Mammary epithelial cell (primary cell): ENCODE measurements at regions of chr1 and their contacts with region 1.

Region 1: DNA sequence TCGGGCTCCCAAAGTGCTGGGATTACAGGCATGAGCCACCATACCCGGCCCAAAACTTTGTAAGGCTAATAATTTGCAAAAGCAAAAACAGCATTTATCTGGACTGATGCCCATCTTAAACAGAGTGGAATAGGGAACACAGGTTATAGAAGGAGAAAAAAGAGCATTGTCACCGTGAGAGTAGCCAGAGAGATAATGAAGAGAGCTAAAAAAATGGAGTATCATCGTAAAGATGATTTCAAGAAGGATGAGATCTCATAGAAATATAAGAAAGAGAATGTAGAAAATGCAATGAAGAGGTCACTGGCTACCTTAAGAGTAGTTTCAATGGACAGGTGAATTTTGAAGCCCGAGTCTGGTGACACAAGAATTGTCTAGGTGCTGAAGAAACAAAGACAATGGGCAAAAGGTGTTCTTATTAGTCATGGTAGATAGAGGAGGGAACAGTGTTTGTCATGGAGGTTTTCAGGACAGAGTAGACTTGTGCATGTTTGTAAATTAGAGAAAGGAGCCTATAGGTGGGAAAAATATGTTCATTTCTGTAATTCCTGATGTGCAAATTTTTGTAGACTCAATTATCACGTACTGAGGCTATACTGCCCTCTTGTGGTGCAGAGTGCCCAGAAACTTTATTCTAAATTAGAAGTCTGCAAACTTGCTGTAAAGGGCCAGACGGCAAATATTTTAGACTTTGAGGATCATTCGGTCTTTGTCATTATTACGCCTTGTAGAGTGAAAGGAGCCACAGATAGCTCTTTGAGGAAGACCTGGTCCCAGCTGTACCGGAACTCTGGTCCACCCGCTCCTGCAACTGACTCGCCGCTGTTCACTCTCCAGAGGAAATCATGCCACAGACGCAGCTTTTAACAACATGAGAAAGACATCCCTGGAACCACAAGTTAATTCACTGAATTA is 8.1 kb upstream of the TMEM183A start:
- DNase-seq: peak; percentile 28
- H3K4me3 ChIP-seq: no peak overlapping the region
- H3K27ac ChIP-seq: no peak overlapping the region
- H3K4me1 ChIP-seq: no peaks in the 10 kb centered on the region
- H3K27me3 ChIP-seq: no peaks in the 10 kb centered on the region
- CTCF ChIP-seq: peak; percentile 80 to 86

Region 2: GRCh38 chr1:202750758-202751157 is 248.3 kb before region 1 on chr1:
- CTCF ChIA-PET with region 1: no interaction called
- dilution Hi-C with region 1: no loop called
- in situ Hi-C with region 1: no loop called
- intact Hi-C with region 1: loop called (anchors 5 kb)
- DNase-seq: no peak
- H3K4me3 ChIP-seq: no peak overlapping the region
- H3K27ac ChIP-seq: no peak overlapping the region
- H3K4me1 ChIP-seq: no peaks in the 10 kb centered on the region
- H3K27me3 ChIP-seq: no peaks in the 10 kb centered on the region
- CTCF ChIP-seq: peak in 1 of 2 donors; percentile 10

Region 3: DNA sequence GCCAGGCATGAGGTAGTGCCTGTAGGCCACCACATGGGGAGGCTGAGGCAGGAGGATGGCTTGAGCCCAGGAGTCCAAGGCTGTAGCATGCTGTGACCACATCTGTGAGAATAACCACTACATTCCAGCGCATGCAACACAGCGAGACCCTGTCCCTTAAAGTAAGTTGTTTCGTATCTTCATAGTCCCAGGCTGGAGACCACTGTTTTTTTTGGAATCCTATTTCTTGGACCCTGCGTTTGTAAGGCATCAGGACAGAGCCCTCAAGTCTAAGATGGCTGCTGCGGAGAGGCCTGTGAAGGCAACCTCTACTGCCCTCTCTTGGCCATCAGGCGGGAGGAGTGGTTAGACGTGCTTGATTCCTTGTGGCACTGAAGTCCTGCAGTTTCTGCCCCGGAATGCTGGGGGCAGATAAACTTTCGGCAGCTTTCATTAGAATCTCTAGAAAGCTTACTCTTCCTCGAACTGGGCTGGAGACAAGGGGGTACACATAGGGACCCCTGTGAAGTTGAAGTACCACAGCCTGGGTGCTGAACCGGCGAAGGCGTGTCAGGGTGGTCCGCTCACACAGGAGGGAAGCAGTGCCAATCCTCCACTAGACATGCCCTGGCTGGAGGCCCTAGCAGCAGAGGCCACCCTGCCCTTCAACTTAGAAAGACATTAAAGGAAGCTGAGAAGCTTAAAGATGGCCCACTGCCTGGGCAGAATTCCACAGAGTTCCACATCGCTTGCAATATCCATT is 146.8 kb before region 1 on chr1:
- CTCF ChIA-PET with region 1: no interaction called
- dilution Hi-C with region 1: no loop called
- in situ Hi-C with region 1: no loop called
- intact Hi-C with region 1: loop called (anchors 2 kb)
- DNase-seq: peak; percentile 36
- H3K4me3 ChIP-seq: no peak overlapping the region
- H3K27ac ChIP-seq: no peak overlapping the region
- H3K4me1 ChIP-seq: no peaks in the 10 kb centered on the region
- H3K27me3 ChIP-seq: no peaks in the 10 kb centered on the region
- CTCF ChIP-seq: peak; percentile 59 to 77

Region 4: DNA sequence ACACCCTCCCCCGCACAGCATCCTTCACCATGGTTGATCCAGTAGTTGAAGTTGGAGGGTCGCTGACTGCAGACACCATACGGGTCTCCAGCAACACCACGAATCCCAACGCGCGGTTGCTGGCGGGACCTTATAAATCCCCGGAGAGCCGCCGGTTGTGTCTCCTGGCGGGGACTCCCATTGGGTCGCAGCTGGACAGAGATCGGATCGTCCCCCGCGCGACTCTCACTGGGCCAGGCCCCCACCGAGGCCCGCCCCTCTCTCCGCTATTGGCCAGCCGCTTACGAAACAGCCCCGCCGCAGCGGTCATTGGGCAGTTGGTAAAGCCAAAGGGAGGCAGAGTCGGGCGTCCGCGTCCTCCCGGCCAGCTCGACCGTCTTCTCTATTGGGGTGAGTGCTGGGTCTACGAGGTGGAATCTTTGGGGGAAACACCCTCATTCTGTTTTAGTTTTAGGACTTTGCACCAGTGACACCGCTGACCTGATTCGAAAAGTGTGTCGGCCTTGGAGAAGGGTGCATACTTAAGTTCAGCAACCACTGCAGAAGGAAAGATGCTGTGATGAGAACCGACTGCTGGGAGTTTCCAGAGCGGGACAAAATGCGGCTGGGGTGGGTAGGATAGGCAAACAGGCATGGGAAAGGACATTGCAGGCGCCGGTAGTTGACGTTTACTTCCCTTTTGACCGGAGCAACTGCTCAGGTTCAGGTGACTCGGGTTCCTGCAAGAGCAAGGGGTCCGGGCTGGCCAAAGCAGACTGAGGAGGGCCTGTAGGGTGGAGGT is 137.5 kb before region 1 on chr1:
- CTCF ChIA-PET with region 1: no interaction called
- dilution Hi-C with region 1: no loop called
- in situ Hi-C with region 1: no loop called
- intact Hi-C with region 1: loop called (anchors 2 kb)
- DNase-seq: peak; percentile 90
- H3K4me3 ChIP-seq: peak overlapping the region; percentile 70 to 78 (median 73)
- H3K27ac ChIP-seq: no peak overlapping the region
- H3K4me1 ChIP-seq: peaks cover 4% of the 10 kb centered on the region
- H3K27me3 ChIP-seq: no peaks in the 10 kb centered on the region
- CTCF ChIP-seq: no peak

Region 5: GRCh38 chr1:202888531-202889360 is 110.3 kb before region 1 on chr1 and contains the start of gene RABIF:
- CTCF ChIA-PET with region 1: no interaction called
- dilution Hi-C with region 1: no loop called
- in situ Hi-C with region 1: no loop called
- intact Hi-C with region 1: loop called (anchors 1 kb)
- DNase-seq: peak; percentile 92
- H3K4me3 ChIP-seq: peak within 1 kb of the TSS; percentile 87 to 93 (median 88)
- H3K27ac ChIP-seq: peak within 1 kb of the TSS; percentile 64
- H3K4me1 ChIP-seq: peaks cover 12% of the 10 kb centered on the region
- H3K27me3 ChIP-seq: no peaks in the 10 kb centered on the region
- CTCF ChIP-seq: peak in 1 of 2 donors; percentile 37
- total RNA-seq, gene RABIF: 5.2 to 8.5 TPM

Region 6: DNA sequence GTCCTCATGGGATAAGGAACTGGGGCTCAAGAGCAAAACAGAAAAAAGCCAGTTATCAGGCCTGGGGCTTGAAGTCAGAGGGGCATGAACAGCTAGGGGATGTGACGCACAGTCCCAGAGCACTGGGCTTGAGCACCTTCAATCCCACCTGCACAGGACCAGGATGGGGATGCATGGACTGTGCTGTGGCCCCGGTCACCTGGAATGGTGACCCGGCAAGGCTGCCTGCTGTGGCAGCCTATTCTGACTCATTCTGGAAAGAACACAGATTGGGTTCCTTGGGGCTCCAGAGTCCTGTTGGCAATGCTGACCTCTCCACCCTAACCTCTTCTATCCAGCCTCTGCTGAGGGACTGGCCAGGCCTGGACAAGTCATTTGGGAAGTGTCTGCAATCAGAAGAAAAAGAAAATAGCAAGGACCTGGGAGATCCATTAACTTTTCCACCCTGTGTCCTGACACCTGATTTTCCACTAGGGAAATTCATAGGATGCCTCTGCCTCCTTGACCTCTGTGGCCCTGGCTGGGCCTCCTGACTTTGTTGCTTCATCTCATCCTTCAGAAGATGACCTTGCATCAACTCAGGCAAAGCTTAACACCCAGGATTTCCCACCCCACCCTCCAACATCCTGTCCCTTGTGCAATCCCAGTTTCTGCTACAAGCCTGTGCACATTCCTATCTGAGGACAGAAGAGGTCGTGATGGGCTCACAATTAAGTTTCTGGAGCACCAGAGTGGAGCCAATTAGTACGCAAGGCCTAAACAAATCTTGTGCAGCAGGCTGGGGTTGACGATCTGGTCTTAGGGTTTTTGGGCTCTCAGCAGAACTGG is 369.7 kb after region 1 on chr1:
- CTCF ChIA-PET with region 1: no interaction called
- dilution Hi-C with region 1: no loop called
- in situ Hi-C with region 1: no loop called
- intact Hi-C with region 1: no loop called
- DNase-seq: peak; percentile 81
- H3K4me3 ChIP-seq: no peak overlapping the region
- H3K27ac ChIP-seq: no peak overlapping the region
- H3K4me1 ChIP-seq: peaks cover 14% of the 10 kb centered on the region
- H3K27me3 ChIP-seq: no peaks in the 10 kb centered on the region
- CTCF ChIP-seq: peak; percentile 53 to 66